ENCODE measurements at regions of chr22 and their contacts with region 1.

Region 1: DNA sequence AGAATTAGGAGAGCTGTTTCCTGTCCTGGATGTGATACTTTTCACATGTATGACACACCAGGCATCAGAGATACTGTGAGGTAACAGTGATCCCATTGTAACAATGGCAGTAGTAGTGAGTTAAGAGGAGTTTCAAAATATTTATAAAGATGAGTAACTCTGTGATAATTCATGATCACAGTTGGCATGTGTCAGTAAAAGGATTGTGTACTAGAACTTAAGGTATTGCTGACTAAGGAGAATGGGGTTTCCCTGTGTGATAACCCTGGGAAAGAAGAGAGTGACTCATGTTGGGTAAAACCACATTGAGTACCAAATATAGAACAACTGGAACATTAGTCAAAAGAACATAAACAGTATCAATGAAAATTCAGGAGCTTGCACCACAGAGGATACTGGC is 22.9 kb upstream of the SLC5A1 start:
- DNase-seq: no peak

Region 2: DNA sequence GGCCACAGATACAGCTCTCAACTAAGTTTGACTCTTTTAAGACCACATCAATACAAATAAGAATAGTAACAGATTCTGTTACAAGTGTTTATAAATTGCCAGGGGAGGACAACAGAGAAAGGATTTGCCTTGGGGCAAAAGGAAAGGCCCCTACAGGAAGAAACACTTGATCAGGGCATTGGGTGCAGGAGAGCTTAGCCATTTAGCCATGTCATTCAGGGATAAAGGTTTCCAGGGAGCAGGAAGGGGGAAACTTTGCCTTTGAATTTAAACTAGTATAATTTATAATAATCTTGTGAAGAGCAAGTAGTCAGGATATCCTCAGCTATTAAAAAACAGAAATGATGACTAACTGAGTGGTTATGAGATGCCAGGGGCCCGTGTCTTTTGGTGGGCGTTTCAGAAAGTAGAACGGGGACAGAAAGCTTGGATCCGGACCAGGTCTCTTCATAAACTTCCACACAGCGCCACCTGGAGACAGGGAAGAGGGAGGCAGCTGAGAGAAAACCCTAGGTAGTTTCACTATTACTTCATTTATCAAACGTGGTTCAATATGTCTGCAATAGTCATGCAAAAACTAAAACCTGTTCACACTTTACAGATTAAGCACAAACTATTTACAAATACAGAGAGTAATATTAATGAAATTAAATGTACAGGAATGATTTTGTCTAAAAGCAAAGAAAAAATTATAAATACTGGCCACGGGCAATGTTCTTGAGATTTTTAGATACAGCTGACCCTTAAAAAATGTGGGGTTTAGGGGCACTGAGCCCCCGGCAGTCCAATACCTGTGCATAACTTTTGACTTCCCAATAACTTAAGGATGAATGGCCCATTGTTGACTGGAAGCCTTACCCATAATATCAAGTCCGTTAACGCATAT is 246.0 kb after region 1 on chr22:
- in situ Hi-C with region 1: loop called (anchors 25 kb)
- DNase-seq: peak; percentile 58